ENCODE measurements at regions of chr11 and their contacts with region 1.

Region 1: DNA sequence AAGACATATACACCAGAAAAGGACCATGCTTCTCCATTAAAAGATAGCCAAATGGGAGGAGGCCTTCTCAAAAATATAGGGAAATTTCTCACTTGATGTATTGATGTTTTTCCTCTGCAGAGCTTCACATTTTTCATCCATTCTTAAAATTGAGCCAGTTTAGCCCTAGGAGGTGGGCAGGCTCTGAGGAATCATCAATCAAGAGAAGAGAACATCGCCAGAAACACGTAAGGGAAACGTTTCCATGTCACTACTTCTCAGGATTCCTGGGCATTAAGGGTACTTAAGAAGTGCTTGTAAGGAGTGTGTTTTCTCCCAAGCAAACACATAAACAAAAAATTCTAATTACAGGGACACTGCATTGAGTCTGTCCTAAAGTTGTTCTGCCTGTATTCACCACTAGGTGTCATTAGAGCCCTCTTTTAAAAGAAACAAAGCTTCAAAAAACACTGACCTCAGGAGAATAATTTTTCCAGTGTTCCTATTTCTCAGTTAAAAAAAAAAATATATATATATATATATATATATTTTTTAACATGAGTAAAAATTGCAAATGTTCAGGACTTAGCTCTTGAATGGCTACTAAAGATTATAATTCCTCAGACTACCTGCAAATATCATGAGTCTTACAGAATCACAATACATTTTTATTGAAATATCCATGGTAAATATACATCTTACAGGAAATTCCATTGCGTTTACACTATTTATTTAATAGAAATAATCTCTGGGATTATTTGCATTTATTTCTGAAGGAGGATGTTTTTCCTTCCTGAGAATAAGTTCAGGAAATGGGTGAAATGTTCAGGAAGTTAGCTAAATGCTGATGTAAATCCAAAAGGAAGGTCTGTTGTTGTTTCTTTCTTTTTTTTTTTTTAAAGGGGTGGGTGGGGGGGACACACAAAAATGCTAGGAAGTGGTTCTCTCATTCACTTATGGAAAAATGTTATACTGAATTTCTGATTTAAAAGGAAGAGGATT is 16.0 kb downstream of the FZD4 start:
- DNase-seq: peak; percentile 65
- ATAC-seq: no peak
- H3K4me3 ChIP-seq: peak overlapping the region; percentile 56 to 71 (median 67); a peak in 4 of 6 replicates
- H3K27ac ChIP-seq: peak overlapping the region; percentile 94
- H3K4me1 ChIP-seq: peaks cover 52% of the 10 kb centered on the region
- H3K27me3 ChIP-seq: no peaks in the 10 kb centered on the region; a peak in 1 of 5 replicates
- CTCF ChIP-seq: peak; percentile 62
- EP300 ChIP-seq: no peak
- POLR2A ChIP-seq: no peak
- RAD21 ChIP-seq: peak; percentile 43; the same call in 1 of the 2 replicates

Region 2: DNA sequence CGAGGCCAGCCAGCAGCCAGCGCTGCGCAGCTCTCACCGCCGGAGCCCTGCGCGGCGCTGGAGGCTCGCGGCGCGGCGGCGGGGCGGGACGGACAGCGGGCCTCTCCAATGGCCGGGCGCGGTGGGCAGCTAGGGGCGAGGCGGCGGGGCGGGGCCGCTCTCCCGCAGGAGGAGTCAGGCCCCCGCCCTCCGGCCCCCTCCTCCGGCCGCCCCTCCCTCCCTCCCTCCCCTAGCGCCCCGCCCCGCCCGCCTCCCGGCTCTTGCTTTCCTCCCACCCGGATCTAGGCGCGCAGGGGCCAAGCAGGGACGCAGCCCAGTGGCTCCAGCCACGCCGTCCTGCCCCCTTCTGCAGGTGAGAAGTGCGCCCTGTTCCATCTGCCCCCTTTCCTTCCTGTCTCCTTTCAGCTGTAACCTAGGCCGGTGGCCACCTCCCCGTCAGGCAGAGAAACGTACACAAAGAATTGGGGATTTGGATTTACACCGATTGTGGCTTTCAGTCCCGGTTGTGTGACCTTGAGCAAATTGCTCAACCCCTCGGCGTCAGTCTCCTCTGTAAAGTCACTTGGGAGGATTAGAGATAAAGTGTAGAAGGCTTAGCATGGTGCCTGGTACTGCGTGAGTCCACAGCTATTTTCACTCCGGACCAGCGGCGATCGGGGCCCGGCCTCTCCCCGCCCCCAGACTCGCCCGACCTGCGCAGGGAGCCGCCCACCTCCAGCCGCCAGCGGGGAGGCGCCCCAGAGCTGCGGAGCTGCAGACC is 16.4 kb after region 1 on chr11 and contains the start of gene FZD4:
- CTCF ChIA-PET with region 1: interaction called, 4 read pairs
- POLR2A ChIA-PET with region 1: interaction called, 287 read pairs
- in situ Hi-C with region 1: no loop called
- intact Hi-C with region 1: loop called (anchors 1 kb)
- DNase-seq: peak; percentile 88
- ATAC-seq: peak; percentile 92
- H3K4me3 ChIP-seq: peak within 1 kb of the TSS; percentile 79 to 87 (median 82)
- H3K27ac ChIP-seq: peak within 1 kb of the TSS; percentile 96
- H3K4me1 ChIP-seq: peaks cover 50% of the 10 kb centered on the region
- H3K27me3 ChIP-seq: no peaks in the 10 kb centered on the region; a peak in 1 of 5 replicates
- CTCF ChIP-seq: peak; percentile 71
- EP300 ChIP-seq: peak in 1 of 2 experiments; percentile 23; a peak in 1 of 4 replicates
- POLR2A ChIP-seq: peak; percentile 67 to 68
- RAD21 ChIP-seq: peak; percentile 78; the same call in 1 of the 2 replicates
- total RNA-seq, gene FZD4: 34.7 and 46.5 TPM in 2 replicates

Region 3: GRCh38 chr11:87007963-87008362 is 68.8 kb after region 1 on chr11:
- CTCF ChIA-PET with region 1: no interaction called
- POLR2A ChIA-PET with region 1: interaction called, 37 read pairs
- in situ Hi-C with region 1: no loop called
- intact Hi-C with region 1: loop called (anchors 1 kb)
- DNase-seq: no peak
- ATAC-seq: no peak
- H3K4me3 ChIP-seq: no peak overlapping the region
- H3K27ac ChIP-seq: no peak overlapping the region
- H3K4me1 ChIP-seq: peaks cover 61% of the 10 kb centered on the region
- H3K27me3 ChIP-seq: no peaks in the 10 kb centered on the region
- CTCF ChIP-seq: no peak
- EP300 ChIP-seq: no peak
- POLR2A ChIP-seq: no peak
- RAD21 ChIP-seq: no peak

Region 4: GRCh38 chr11:87037450-87038234 is 98.5 kb after region 1 on chr11 and contains the start of gene TMEM135:
- CTCF ChIA-PET with region 1: no interaction called
- POLR2A ChIA-PET with region 1: interaction called, 53 read pairs
- in situ Hi-C with region 1: no loop called
- intact Hi-C with region 1: loop called (anchors 1 kb)
- DNase-seq: peak; percentile 94
- ATAC-seq: peak; percentile 96
- H3K4me3 ChIP-seq: peak within 1 kb of the TSS; percentile 79 to 98 (median 93)
- H3K27ac ChIP-seq: peak within 1 kb of the TSS; percentile 95
- H3K4me1 ChIP-seq: peaks cover 60% of the 10 kb centered on the region
- H3K27me3 ChIP-seq: no peaks in the 10 kb centered on the region; a peak in 1 of 5 replicates
- CTCF ChIP-seq: peak; percentile 60
- EP300 ChIP-seq: peak; percentile 50 to 67; a peak in 3 of 4 replicates
- POLR2A ChIP-seq: peak; percentile 79 to 83
- RAD21 ChIP-seq: peak; percentile 64; the same call in 1 of the 2 replicates
- total RNA-seq, gene TMEM135: 88.9 and 137 TPM in 2 replicates

Region 5: DNA sequence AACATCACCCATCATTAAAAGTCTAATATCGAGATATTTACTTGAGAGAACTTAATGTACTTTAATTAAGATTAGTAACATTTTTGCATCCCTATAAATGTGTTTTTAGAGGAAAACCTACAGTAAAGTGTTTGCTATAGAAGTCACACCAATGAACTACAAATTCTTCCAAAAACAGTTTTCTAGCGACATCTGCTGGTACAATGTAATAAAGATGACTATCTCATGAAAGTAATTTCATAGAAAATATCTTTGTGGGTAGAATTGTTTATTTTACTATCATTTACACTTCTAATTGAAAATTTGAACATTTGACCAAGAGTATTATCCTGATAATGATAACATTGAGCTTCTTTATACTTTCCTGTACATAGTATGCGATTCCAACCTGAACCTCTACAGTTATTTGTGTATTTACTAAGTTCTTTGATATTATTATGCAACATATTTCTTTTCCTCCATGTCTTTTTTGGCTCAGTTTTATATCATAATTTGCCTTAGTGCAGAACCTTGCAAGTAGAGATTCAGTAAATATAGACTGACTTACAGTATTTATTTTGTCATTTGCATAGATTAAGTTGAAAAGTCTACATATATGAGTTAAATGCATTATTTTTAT is 351.2 kb after region 1 on chr11:
- CTCF ChIA-PET with region 1: interaction called, 29 read pairs
- POLR2A ChIA-PET with region 1: interaction called, 4 read pairs
- in situ Hi-C with region 1: loop called (anchors 5 kb)
- intact Hi-C with region 1: loop called (anchors 1 kb)
- DNase-seq: peak; percentile 59
- ATAC-seq: no peak; the same call in 2 of the 3 replicates
- H3K4me3 ChIP-seq: no peak overlapping the region
- H3K27ac ChIP-seq: no peak overlapping the region
- H3K4me1 ChIP-seq: no peaks in the 10 kb centered on the region
- H3K27me3 ChIP-seq: no peaks in the 10 kb centered on the region
- CTCF ChIP-seq: peak; percentile 58
- EP300 ChIP-seq: no peak
- POLR2A ChIP-seq: no peak
- RAD21 ChIP-seq: peak; percentile 41; the same call in 1 of the 2 replicates

Region 6: GRCh38 chr11:87421422-87421821 is 482.2 kb after region 1 on chr11:
- CTCF ChIA-PET with region 1: interaction called, 3 read pairs
- POLR2A ChIA-PET with region 1: interaction called, 3 read pairs
- in situ Hi-C with region 1: loop called (anchors 10 kb)
- intact Hi-C with region 1: loop called (anchors 1 kb)
- DNase-seq: peak; percentile 67
- ATAC-seq: peak; percentile 97
- H3K4me3 ChIP-seq: no peak overlapping the region
- H3K27ac ChIP-seq: no peak overlapping the region
- H3K4me1 ChIP-seq: no peaks in the 10 kb centered on the region
- H3K27me3 ChIP-seq: peaks cover 0 to 9% of the 10 kb centered on the region in 2 experiments; a peak in 2 of 5 replicates
- CTCF ChIP-seq: peak; percentile 86
- EP300 ChIP-seq: no peak
- POLR2A ChIP-seq: no peak
- RAD21 ChIP-seq: peak; percentile 61